H1 (cell line): ENCODE measurements at regions of chr2 and their contacts with region 1.

Region 1: DNA sequence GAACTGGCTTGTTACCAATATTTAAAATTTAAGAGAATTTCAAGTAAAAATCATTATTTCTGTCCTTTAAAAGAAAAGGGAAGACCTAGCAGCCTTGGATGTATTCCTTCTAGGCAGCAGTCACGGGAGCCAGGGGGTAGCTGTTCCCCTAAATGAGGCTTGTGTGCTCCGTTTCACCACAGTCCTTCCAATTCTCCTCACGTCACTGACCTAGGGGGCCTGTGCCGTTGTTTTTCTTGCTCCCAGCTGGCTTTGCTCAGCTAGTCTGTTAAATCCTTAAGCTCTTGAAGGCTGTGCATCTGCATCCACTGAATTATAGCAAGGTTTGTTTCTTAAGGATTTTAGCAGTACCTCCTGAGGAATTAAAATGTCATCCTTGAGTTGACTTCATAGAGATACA is 9.9 kb downstream of the KLHL23 start:
- DNase-seq: no peak
- H3K4me3 ChIP-seq: no peak overlapping the region
- H3K27ac ChIP-seq: no peak overlapping the region
- H3K4me1 ChIP-seq: peaks cover 0 to 3% (median 0%) of the 10 kb centered on the region in 4 experiments; a peak in 2 of 7 replicates
- H3K27me3 ChIP-seq: no peaks in the 10 kb centered on the region
- CTCF ChIP-seq: no peak
- EP300 ChIP-seq: no peak
- POLR2A ChIP-seq: no peak
- RAD21 ChIP-seq: no peak

Region 2: GRCh38 chr2:169406891-169407290 is 336.7 kb before region 1 on chr2:
- CTCF ChIA-PET with region 1: no interaction called
- POLR2A ChIA-PET with region 1: no interaction called
- DNase-seq: no peak
- H3K4me3 ChIP-seq: no peak overlapping the region
- H3K27ac ChIP-seq: no peak overlapping the region
- H3K4me1 ChIP-seq: peaks cover 2 to 9% (median 3%) of the 10 kb centered on the region in 4 experiments; a peak in 2 of 7 replicates
- H3K27me3 ChIP-seq: no peaks in the 10 kb centered on the region
- CTCF ChIP-seq: no peak
- EP300 ChIP-seq: no peak
- POLR2A ChIP-seq: no peak
- RAD21 ChIP-seq: no peak

Region 3: DNA sequence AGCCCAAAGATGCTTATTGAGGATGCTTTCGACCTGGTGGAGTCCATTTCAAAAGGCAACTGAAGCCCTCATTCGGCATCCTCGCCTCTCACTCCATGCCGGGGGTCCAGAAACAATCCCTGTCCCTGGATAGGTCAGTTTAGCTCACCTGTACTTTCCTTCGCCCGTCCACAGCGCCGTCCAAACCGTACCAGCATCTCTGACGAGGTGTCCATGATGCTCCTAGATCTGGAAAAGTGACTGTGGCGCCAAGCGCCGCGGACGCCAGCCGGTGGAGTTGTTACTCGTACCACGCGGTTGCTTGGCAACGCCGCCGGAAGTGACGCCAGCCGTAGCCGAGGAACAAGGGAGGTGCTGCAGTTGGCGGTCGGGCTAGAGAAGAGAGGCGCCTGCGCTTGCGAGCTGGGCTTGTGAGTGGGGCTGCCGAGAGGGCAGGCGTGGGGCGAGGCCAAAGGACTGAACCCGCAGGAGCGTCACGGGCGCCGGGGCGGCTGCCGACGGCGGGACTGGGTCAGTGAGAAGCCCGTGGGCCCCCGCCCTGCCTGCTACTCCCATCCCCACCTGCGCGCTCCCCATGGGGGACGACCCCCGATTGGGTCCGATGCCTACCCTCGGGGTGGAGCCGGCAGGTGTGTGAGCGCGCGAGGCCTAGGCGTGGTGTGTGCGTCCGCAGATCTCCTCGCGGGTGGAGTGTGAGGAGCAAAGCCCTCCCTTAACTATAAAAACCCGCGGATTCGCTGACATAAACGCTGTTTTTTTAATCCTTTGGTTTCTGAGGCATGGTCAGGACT is 49.2 kb before region 1 on chr2 and contains the starts of genes CFAP210 and PHOSPHO2:
- CTCF ChIA-PET with region 1: no interaction called
- POLR2A ChIA-PET with region 1: no interaction called
- DNase-seq: peak; percentile 70 to 98
- H3K4me3 ChIP-seq: peak within 1 kb of the TSS; percentile 64 to 93 (median 78)
- H3K27ac ChIP-seq: peak within 1 kb of the TSS; percentile 90
- H3K4me1 ChIP-seq: peaks cover 0 to 1% (median 0%) of the 10 kb centered on the region in 4 experiments; a peak in 1 of 7 replicates
- H3K27me3 ChIP-seq: no peaks in the 10 kb centered on the region
- CTCF ChIP-seq: no peak
- EP300 ChIP-seq: 0 out of 3 replicates have a peak, but pooled peaks of 1 of the 2 experiments have one; percentile 17
- POLR2A ChIP-seq: peak; percentile 82 to 83
- RAD21 ChIP-seq: 0 out of 4 replicates have a peak, but pooled peaks of 1 of the 2 experiments have one; percentile 4
- total RNA-seq, gene CFAP210: 0.37 and 0.86 TPM in 2 replicates
- total RNA-seq, gene PHOSPHO2: 8.5 and 9.5 TPM in 2 replicates

Region 4: GRCh38 chr2:169755083-169755870 is 11.7 kb after region 1 on chr2:
- CTCF ChIA-PET with region 1: interaction called, 6 read pairs
- POLR2A ChIA-PET with region 1: interaction called, 14 read pairs
- DNase-seq: no peak
- H3K4me3 ChIP-seq: no peak overlapping the region
- H3K27ac ChIP-seq: no peak overlapping the region
- H3K4me1 ChIP-seq: no peaks in the 10 kb centered on the region
- H3K27me3 ChIP-seq: no peaks in the 10 kb centered on the region
- CTCF ChIP-seq: no peak
- EP300 ChIP-seq: no peak
- POLR2A ChIP-seq: no peak
- RAD21 ChIP-seq: no peak

Region 5: GRCh38 chr2:169839954-169840746 is 96.6 kb after region 1 on chr2:
- CTCF ChIA-PET with region 1: no interaction called
- POLR2A ChIA-PET with region 1: no interaction called
- DNase-seq: no peak
- H3K4me3 ChIP-seq: no peak overlapping the region
- H3K27ac ChIP-seq: no peak overlapping the region
- H3K4me1 ChIP-seq: no peaks in the 10 kb centered on the region
- H3K27me3 ChIP-seq: no peaks in the 10 kb centered on the region
- CTCF ChIP-seq: no peak
- EP300 ChIP-seq: no peak
- POLR2A ChIP-seq: no peak
- RAD21 ChIP-seq: no peak; a peak in 1 of 4 replicates